ENCODE measurements at regions of chr2 and their contacts with region 1.

Region 1: GRCh38 chr2:156435715-156436496 is at the start of gene GPD2:
- DNase-seq: peak; percentile 91
- ATAC-seq: peak; percentile 92
- H3K4me3 ChIP-seq: peak within 1 kb of the TSS; percentile 74
- H3K27ac ChIP-seq: peak within 1 kb of the TSS; percentile 91
- H3K4me1 ChIP-seq: peaks cover 48% of the 10 kb centered on the region
- H3K27me3 ChIP-seq: no peaks in the 10 kb centered on the region
- CTCF ChIP-seq: no peak
- total RNA-seq, gene GPD2: 91.3 and 107 TPM in 2 replicates

Region 2: DNA sequence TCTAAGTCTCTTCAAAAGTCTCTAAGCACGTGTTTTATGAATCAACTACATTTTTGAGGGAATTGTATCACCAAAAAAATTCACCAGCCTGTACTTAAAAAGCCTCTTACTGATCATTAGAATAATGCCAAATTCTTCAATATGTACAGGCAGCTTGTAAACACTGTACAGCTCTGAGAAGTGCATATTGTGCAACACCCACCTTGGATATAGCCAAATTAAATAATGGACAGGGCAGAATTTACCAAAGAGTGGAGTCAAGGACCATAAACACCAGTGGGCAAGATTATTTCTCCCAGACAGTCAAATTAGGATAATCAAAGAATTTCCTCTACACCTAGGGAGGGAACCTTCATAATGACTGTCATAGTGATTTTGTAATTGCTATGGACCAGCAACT is 441.6 kb before region 1 on chr2:
- CTCF ChIA-PET with region 1: no interaction called
- POLR2A ChIA-PET with region 1: no interaction called
- intact Hi-C with region 1: no loop called
- DNase-seq: no peak
- ATAC-seq: no peak
- H3K4me3 ChIP-seq: no peak overlapping the region
- H3K27ac ChIP-seq: no peak overlapping the region
- H3K4me1 ChIP-seq: no peaks in the 10 kb centered on the region
- H3K27me3 ChIP-seq: no peaks in the 10 kb centered on the region
- CTCF ChIP-seq: no peak

Region 3: DNA sequence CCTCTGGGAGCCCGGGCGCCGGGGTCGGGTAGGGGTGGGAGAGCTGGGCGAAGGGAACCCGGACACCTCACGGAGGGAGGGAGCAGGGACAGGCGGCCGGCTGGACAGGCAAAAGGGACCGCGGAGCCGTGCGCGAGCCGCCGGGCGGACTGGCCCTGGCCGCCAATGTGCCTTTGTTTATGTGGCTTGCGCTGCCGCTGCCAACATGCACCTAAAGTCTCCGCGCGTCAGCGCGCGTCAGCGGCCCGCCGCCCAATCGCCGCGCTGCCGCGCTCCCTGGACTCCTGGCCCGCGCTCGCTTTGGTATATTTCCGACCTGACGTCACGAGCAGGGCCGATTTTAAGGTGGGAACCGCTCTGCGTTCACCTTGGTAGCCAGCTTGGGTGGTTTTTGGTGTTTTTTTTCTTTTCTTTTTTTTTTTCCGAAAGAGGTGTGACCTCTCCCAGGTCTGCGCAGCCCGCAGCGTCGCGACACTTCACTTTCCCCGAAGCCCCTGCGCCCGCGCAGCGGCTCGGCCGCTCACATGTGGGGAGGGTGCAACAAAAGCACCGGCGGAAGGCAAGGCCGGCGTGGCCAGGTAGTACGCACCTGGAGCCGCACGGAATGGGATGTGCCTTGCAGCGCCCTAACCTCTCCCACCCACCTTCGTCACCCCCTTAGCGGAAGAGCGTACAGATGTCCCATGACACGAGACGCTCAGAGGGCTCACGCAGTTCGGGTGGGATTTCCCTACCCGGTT is 103.2 kb before region 1 on chr2 and contains the start of gene NR4A2:
- CTCF ChIA-PET with region 1: no interaction called
- POLR2A ChIA-PET with region 1: no interaction called
- intact Hi-C with region 1: loop called (anchors 1 kb)
- DNase-seq: peak; percentile 90
- ATAC-seq: peak; percentile 62
- H3K4me3 ChIP-seq: peak within 1 kb of the TSS; percentile 95
- H3K27ac ChIP-seq: peak within 1 kb of the TSS; percentile 97
- H3K4me1 ChIP-seq: peaks cover 14% of the 10 kb centered on the region; the same call in 1 of the 2 replicates
- H3K27me3 ChIP-seq: no peaks in the 10 kb centered on the region
- CTCF ChIP-seq: no peak
- total RNA-seq, gene NR4A2: 12.0 and 13.8 TPM in 2 replicates

Region 4: GRCh38 chr2:156400706-156401678 is 34.9 kb before region 1 on chr2:
- CTCF ChIA-PET with region 1: no interaction called
- POLR2A ChIA-PET with region 1: no interaction called
- intact Hi-C with region 1: loop called (anchors 1 kb)
- DNase-seq: peak; percentile 83
- ATAC-seq: peak; percentile 73
- H3K4me3 ChIP-seq: peak overlapping the region; percentile 74
- H3K27ac ChIP-seq: peak overlapping the region; percentile 91
- H3K4me1 ChIP-seq: peaks cover 21% of the 10 kb centered on the region
- H3K27me3 ChIP-seq: no peaks in the 10 kb centered on the region
- CTCF ChIP-seq: no peak

Region 5: GRCh38 chr2:156466739-156467405 is 31.0 kb after region 1 on chr2:
- CTCF ChIA-PET with region 1: no interaction called
- POLR2A ChIA-PET with region 1: interaction called, 7 read pairs
- intact Hi-C with region 1: loop called (anchors 2 kb)
- DNase-seq: peak; percentile 38
- ATAC-seq: peak; percentile 79
- H3K4me3 ChIP-seq: no peak overlapping the region
- H3K27ac ChIP-seq: peak overlapping the region; percentile 3; the same call in 1 of the 2 replicates
- H3K4me1 ChIP-seq: peaks cover 38% of the 10 kb centered on the region
- H3K27me3 ChIP-seq: no peaks in the 10 kb centered on the region
- CTCF ChIP-seq: no peak

Region 6: GRCh38 chr2:156589381-156590079 is 153.6 kb after region 1 on chr2:
- CTCF ChIA-PET with region 1: no interaction called
- POLR2A ChIA-PET with region 1: no interaction called
- intact Hi-C with region 1: loop called (anchors 2 kb)
- DNase-seq: peak; percentile 67
- ATAC-seq: peak; percentile 76
- H3K4me3 ChIP-seq: no peak overlapping the region
- H3K27ac ChIP-seq: no peak overlapping the region
- H3K4me1 ChIP-seq: no peaks in the 10 kb centered on the region
- H3K27me3 ChIP-seq: no peaks in the 10 kb centered on the region
- CTCF ChIP-seq: peak; percentile 77

Measured in PC-3 (cell line).